CD14-positive monocyte (primary cell): ENCODE measurements at regions of chr3 and their contacts with region 1.

Region 1: GRCh38 chr3:184135149-184135910 is at the start of gene EIF2B5:
- DNase-seq: peak; percentile 87 to 90 (median 88)
- H3K4me3 ChIP-seq: peak within 1 kb of the TSS; percentile 68 to 96 (median 91)
- H3K4me3 Mint-ChIP-seq: peak within 1 kb of the TSS; percentile 94 to 97
- H3K27ac ChIP-seq: peak within 1 kb of the TSS; percentile 78 to 91
- H3K27ac Mint-ChIP-seq: peak within 1 kb of the TSS; percentile 86 to 93 (median 89)
- H3K4me1 ChIP-seq: peaks cover 18 to 33% of the 10 kb centered on the region in 2 donors
- H3K4me1 Mint-ChIP-seq: peaks cover 30% of the 10 kb centered on the region
- H3K27me3 ChIP-seq: no peaks in the 10 kb centered on the region
- H3K27me3 Mint-ChIP-seq: peaks cover 0 to 4% (median 0%) of the 10 kb centered on the region in 3 donors
- CTCF ChIP-seq: no peak
- polyA plus RNA-seq, gene EIF2B5: 22.7 to 50.0 (median 24.1) TPM

Region 2: GRCh38 chr3:183895296-183895695 is 240.0 kb before region 1 on chr3:
- intact Hi-C with region 1: loop called (anchors 10 kb)
- DNase-seq: peak; percentile 44 to 50 (median 47)
- H3K4me3 ChIP-seq: no peak overlapping the region
- H3K4me3 Mint-ChIP-seq: no peak overlapping the region
- H3K27ac ChIP-seq: no peak overlapping the region
- H3K27ac Mint-ChIP-seq: no peak overlapping the region
- H3K4me1 ChIP-seq: no peaks in the 10 kb centered on the region
- H3K4me1 Mint-ChIP-seq: peaks cover 5% of the 10 kb centered on the region
- H3K27me3 ChIP-seq: no peaks in the 10 kb centered on the region
- H3K27me3 Mint-ChIP-seq: peaks cover 4 to 11% (median 10%) of the 10 kb centered on the region in 3 donors
- CTCF ChIP-seq: peak; percentile 86

Region 3: DNA sequence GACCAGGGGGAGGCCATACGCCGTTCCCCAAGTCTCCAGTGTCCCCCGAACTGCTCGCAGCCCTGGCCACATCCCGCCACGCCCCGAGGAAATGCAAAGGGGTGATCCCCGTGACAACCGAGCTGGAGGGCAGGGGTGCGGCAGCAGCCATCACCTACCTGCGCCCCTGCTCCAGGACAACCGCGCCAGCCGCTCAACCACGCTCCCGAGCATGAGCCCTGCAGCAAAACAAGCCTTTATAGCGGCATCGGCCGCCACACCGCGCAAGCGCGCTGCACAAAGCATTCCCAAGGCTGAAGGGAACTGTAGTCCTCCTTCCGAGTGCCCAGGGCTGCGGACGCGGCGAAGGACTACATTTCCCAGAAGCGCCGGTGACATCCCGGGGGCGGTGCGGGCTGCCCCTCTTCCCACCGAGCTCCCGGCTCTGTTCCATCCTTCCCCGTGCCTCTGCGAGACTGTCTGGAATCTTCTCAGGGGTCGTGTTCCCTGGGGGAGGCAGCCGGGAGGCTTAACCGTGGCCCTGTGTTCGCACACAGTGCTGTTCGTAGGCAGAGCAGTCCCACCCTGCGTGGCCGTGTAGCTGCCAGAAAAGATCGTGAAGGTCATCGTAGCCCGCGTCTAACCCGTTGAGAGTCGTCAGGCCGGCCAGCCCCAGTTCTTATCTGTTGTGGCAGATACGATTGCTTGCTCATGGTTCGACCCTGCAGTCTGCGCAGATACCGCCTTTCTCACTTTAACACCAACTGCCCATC is 117.5 kb before region 1 on chr3 and contains the start of gene ABCC5:
- intact Hi-C with region 1: loop called (anchors 1 to 10 kb)
- DNase-seq: peak; percentile 75 to 85 (median 80)
- H3K4me3 ChIP-seq: peak within 1 kb of the TSS; percentile 88 to 100 (median 100)
- H3K4me3 Mint-ChIP-seq: peak within 1 kb of the TSS; percentile 96 to 97
- H3K27ac ChIP-seq: peak within 1 kb of the TSS; percentile 43 to 82
- H3K27ac Mint-ChIP-seq: peak within 1 kb of the TSS; percentile 30 to 94 (median 81)
- H3K4me1 ChIP-seq: peaks cover 36 to 45% of the 10 kb centered on the region in 2 donors
- H3K4me1 Mint-ChIP-seq: peaks cover 42% of the 10 kb centered on the region
- H3K27me3 ChIP-seq: no peaks in the 10 kb centered on the region
- H3K27me3 Mint-ChIP-seq: peaks cover 5 to 8% (median 7%) of the 10 kb centered on the region in 3 donors
- CTCF ChIP-seq: peak; percentile 85
- polyA plus RNA-seq, gene ABCC5: 6.2 to 30.9 (median 7.7) TPM

Region 4: DNA sequence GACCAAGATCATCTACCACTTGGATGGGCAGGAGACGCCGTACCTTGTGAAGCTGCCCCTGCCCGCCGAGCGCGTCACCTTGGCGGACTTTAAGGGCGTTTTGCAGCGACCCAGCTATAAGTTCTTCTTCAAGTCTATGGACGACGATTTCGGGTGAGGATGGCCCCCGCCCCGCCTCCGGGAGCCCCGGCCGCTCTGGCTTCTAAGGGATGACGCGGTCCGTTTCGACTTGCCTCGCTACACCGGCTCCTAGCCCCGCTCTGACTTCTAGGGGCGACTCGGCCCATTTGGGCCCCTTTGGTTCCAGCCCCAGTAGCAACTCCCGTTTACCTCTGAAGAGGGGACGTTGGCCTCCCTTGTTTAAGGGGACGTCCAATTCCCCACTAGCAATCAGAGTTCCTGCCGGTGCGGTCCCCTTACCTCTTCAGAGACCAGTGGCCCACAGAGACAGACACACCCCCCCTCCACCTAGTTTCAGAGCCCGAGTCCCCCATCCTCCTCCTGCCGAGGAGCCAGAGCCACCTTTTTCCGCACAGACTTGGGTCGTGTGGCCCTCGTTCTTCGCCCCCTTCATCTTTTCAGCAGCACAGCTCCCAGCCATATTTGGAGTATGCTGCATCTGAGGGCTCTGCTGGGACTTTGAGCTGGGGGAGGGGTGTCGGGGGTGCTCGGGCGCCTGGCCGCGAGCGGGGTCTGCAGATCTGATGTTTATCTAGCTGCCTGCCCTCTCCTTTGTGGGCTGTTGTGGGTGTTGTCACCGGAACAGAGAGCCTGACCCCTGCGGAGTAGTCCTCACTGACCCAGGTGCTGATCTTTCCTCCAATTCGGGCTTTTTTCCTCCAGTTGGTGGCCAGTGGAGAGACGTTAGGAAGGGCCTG is 20.6 kb after region 1 on chr3:
- intact Hi-C with region 1: loop called in 1 of 2 experiments (anchors 2 kb)
- DNase-seq: peak in 2 of 3 donors; percentile 35 to 37
- H3K4me3 ChIP-seq: peak overlapping the region; percentile 77 to 97 (median 94)
- H3K4me3 Mint-ChIP-seq: peak overlapping the region; percentile 96
- H3K27ac ChIP-seq: peak overlapping the region; percentile 63 to 77
- H3K27ac Mint-ChIP-seq: peak overlapping the region; percentile 73 to 89 (median 85)
- H3K4me1 ChIP-seq: peaks cover 37 to 44% of the 10 kb centered on the region in 2 donors
- H3K4me1 Mint-ChIP-seq: peaks cover 45% of the 10 kb centered on the region
- H3K27me3 ChIP-seq: no peaks in the 10 kb centered on the region
- H3K27me3 Mint-ChIP-seq: peaks cover 0 to 4% (median 2%) of the 10 kb centered on the region in 3 donors
- CTCF ChIP-seq: no peak

Region 5: GRCh38 chr3:184174646-184175492 is 39.5 kb after region 1 on chr3 and contains the start of gene AP2M1:
- intact Hi-C with region 1: loop called in 1 of 2 experiments (anchors 5 kb)
- DNase-seq: peak; percentile 97 to 99 (median 98)
- H3K4me3 ChIP-seq: peak within 1 kb of the TSS; percentile 82 to 98 (median 91)
- H3K4me3 Mint-ChIP-seq: peak within 1 kb of the TSS; percentile 94 to 97
- H3K27ac ChIP-seq: peak within 1 kb of the TSS; percentile 17 to 84
- H3K27ac Mint-ChIP-seq: peak within 1 kb of the TSS; percentile 76 to 94 (median 86)
- H3K4me1 ChIP-seq: peaks cover 27 to 33% of the 10 kb centered on the region in 2 donors
- H3K4me1 Mint-ChIP-seq: peaks cover 34% of the 10 kb centered on the region
- H3K27me3 ChIP-seq: no peaks in the 10 kb centered on the region
- H3K27me3 Mint-ChIP-seq: peaks cover 0 to 3% (median 3%) of the 10 kb centered on the region in 3 donors
- CTCF ChIP-seq: no peak
- polyA plus RNA-seq, gene AP2M1: 283 to 327 (median 295) TPM

Region 6: DNA sequence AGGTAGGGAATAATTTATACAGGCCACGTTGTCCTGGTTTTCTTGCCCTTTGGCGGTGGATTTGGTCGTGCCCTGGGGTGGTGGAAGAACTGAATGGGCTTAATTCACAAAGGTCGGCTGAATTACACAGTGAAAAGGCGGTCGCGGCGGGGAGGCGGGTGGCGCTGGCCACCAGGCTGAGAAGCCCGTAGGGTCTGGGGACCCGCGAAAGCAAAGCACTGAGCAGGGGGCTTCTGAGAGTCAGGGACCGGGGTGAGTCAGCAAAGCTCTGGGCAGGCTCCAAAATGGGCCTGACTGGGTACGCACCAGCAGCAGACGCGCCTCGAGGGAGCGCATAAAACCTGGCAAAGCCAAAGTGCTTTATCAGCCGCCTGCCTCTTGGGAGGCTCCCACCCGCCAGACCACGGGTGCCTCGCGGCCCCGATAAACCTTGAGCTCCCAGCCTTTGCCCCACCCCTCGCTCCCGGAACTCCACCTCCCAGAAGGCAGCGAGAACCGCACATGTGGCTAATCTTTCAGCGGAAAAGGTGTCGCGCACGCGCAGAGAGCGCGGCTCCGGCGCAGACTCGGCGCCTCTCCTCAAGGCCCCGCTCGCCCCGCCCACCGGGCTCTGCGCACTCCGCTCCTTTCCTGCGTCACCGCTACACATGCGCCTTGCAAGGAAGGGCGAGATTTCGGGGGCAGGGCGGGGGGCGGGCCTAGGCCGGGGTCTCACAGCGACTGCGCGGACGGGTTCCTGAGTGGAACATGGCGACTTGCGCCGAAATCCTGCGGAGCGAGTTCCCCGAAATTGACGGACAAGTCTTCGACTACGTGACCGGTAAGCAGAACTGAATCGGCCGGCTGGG is 50.4 kb after region 1 on chr3 and contains the start of gene ABCF3:
- intact Hi-C with region 1: loop called in 1 of 2 experiments (anchors 5 kb)
- DNase-seq: peak; percentile 98 to 99 (median 99)
- H3K4me3 ChIP-seq: peak within 1 kb of the TSS; percentile 60 to 94 (median 83)
- H3K4me3 Mint-ChIP-seq: peak within 1 kb of the TSS; percentile 97 to 98
- H3K27ac ChIP-seq: peak within 1 kb of the TSS; percentile 82 to 89
- H3K27ac Mint-ChIP-seq: peak within 1 kb of the TSS; percentile 95 to 99 (median 96)
- H3K4me1 ChIP-seq: peaks cover 17 to 25% of the 10 kb centered on the region in 2 donors
- H3K4me1 Mint-ChIP-seq: peaks cover 23% of the 10 kb centered on the region
- H3K27me3 ChIP-seq: no peaks in the 10 kb centered on the region
- H3K27me3 Mint-ChIP-seq: no peaks in the 10 kb centered on the region
- CTCF ChIP-seq: no peak
- polyA plus RNA-seq, gene ABCF3: 13.5 to 74.8 (median 13.9) TPM